ENCODE measurements at regions of chr2 and their contacts with region 1.

Region 1: GRCh38 chr2:166539340-166540162 is 45.5 kb upstream of the SCN7A start:
- DNase-seq: peak in 1 of 2 experiments; percentile 63
- H3K4me3 ChIP-seq: no peak overlapping the region
- H3K4me3 Mint-ChIP-seq: no peak overlapping the region
- H3K27ac Mint-ChIP-seq: no peak overlapping the region
- H3K4me1 ChIP-seq: no peaks in the 10 kb centered on the region
- H3K4me1 Mint-ChIP-seq: no peaks in the 10 kb centered on the region
- H3K27me3 ChIP-seq: no peaks in the 10 kb centered on the region
- H3K27me3 Mint-ChIP-seq: no peaks in the 10 kb centered on the region
- CTCF ChIP-seq: peak; percentile 79 to 80

Region 2: DNA sequence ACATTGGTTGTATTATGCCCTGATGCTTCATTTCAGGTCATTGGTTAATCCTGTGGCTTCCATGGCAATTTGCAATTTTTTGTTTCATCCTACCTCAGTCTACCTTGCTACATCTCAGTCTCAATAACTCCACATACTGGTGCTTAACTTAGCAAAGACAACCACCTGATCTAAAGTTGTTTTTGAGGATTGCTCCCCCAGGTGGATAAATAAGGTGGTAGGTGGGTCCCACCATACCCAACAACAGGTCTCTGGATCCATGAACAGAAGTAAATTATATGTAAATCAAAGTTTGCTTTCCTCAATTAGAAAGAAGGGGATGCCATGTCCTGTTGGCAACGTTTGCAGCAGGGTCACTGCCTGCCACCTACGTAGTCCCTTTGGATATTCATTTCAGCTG is 355.7 kb after region 1 on chr2:
- CTCF ChIA-PET with region 1: no interaction called
- POLR2A ChIA-PET with region 1: no interaction called
- intact Hi-C with region 1: loop called (anchors 1 kb)
- DNase-seq: no peak
- H3K4me3 ChIP-seq: no peak overlapping the region
- H3K4me3 Mint-ChIP-seq: no peak overlapping the region
- H3K27ac Mint-ChIP-seq: no peak overlapping the region
- H3K4me1 ChIP-seq: no peaks in the 10 kb centered on the region
- H3K4me1 Mint-ChIP-seq: no peaks in the 10 kb centered on the region
- H3K27me3 ChIP-seq: no peaks in the 10 kb centered on the region
- H3K27me3 Mint-ChIP-seq: peaks cover 3% of the 10 kb centered on the region
- CTCF ChIP-seq: no peak

Region 3: GRCh38 chr2:167127135-167127534 is 587.6 kb after region 1 on chr2:
- CTCF ChIA-PET with region 1: no interaction called
- POLR2A ChIA-PET with region 1: no interaction called
- intact Hi-C with region 1: loop called (anchors 5 kb)
- DNase-seq: peak in 1 of 2 experiments; percentile 4
- H3K4me3 ChIP-seq: no peak overlapping the region
- H3K4me3 Mint-ChIP-seq: no peak overlapping the region
- H3K27ac Mint-ChIP-seq: no peak overlapping the region
- H3K4me1 ChIP-seq: no peaks in the 10 kb centered on the region
- H3K4me1 Mint-ChIP-seq: no peaks in the 10 kb centered on the region
- H3K27me3 ChIP-seq: no peaks in the 10 kb centered on the region
- H3K27me3 Mint-ChIP-seq: peaks cover 2% of the 10 kb centered on the region
- CTCF ChIP-seq: peak in 1 of 2 experiments; percentile 29

Region 4: GRCh38 chr2:167212014-167212648 is 672.6 kb after region 1 on chr2:
- CTCF ChIA-PET with region 1: interaction called, 3 read pairs
- POLR2A ChIA-PET with region 1: no interaction called
- intact Hi-C with region 1: loop called (anchors 1 kb)
- DNase-seq: peak in 1 of 2 experiments; percentile 58
- H3K4me3 ChIP-seq: no peak overlapping the region
- H3K4me3 Mint-ChIP-seq: no peak overlapping the region
- H3K27ac Mint-ChIP-seq: no peak overlapping the region
- H3K4me1 ChIP-seq: no peaks in the 10 kb centered on the region
- H3K4me1 Mint-ChIP-seq: no peaks in the 10 kb centered on the region
- H3K27me3 ChIP-seq: no peaks in the 10 kb centered on the region
- H3K27me3 Mint-ChIP-seq: no peaks in the 10 kb centered on the region
- CTCF ChIP-seq: peak; percentile 60

Region 5: GRCh38 chr2:167331636-167332232 is 792.2 kb after region 1 on chr2:
- CTCF ChIA-PET with region 1: no interaction called
- POLR2A ChIA-PET with region 1: no interaction called
- intact Hi-C with region 1: loop called (anchors 1 kb)
- DNase-seq: peak; percentile 32 to 41
- H3K4me3 ChIP-seq: no peak overlapping the region
- H3K4me3 Mint-ChIP-seq: no peak overlapping the region
- H3K27ac Mint-ChIP-seq: no peak overlapping the region
- H3K4me1 ChIP-seq: no peaks in the 10 kb centered on the region
- H3K4me1 Mint-ChIP-seq: no peaks in the 10 kb centered on the region
- H3K27me3 ChIP-seq: no peaks in the 10 kb centered on the region
- H3K27me3 Mint-ChIP-seq: peaks cover 2% of the 10 kb centered on the region
- CTCF ChIP-seq: peak in 1 of 2 experiments; percentile 35